Activated naive CD4-positive, alpha-beta T cell treated with anti-CD3 and anti-CD28 coated beads for 36 hours (primary cell): ENCODE measurements at regions of chr2 and their contacts with region 1.

Region 1: DNA sequence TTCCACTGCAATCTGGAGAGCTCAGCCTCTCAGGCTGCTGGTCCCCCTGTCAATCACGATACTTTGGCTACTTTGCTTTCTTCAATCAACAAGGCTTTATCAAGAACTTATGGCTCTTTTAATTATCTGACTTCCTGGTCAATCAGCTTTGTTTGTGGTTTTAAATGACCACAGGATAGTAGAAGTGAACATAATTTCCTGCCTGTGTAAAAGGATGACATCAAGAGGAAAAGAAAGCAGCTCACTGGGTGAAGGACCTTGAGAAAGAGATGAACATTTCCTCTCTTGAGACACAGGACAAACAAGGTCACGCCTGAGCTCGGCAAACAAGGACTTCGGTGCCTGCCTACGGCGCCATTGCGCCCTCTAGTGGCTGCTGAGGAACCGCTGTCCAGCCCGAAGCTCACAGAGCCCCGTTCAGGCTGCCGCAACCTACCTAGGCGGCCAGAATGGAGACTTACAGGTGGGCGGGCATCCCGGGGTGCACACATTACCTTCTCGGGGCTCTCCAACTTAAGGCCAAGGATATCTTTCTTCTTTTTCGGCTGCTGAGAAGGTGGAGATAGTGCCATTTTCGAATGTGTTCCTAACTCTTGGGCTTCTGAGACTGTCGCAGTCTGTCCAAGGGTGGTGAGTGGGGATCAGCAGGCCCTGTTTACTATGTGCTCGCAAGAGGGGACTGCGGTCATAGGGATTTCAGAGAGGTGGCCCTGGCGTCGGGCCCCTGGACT is 54.0 kb downstream of the IL1RL2 start:
- DNase-seq: peak; percentile 92
- H3K4me3 Mint-ChIP-seq: no peak overlapping the region
- H3K27ac Mint-ChIP-seq: peak overlapping the region; percentile 7
- H3K4me1 Mint-ChIP-seq: peaks cover 31% of the 10 kb centered on the region
- H3K27me3 Mint-ChIP-seq: no peaks in the 10 kb centered on the region

Region 2: GRCh38 chr2:101900375-101900774 is 340.4 kb before region 1 on chr2:
- CTCF ChIA-PET with region 1: interaction called, 3 read pairs
- intact Hi-C with region 1: loop called (anchors 5 kb)
- DNase-seq: peak; percentile 87
- H3K4me3 Mint-ChIP-seq: no peak overlapping the region
- H3K27ac Mint-ChIP-seq: peak overlapping the region; percentile 87
- H3K4me1 Mint-ChIP-seq: peaks cover 33% of the 10 kb centered on the region
- H3K27me3 Mint-ChIP-seq: peaks cover 2% of the 10 kb centered on the region

Region 3: DNA sequence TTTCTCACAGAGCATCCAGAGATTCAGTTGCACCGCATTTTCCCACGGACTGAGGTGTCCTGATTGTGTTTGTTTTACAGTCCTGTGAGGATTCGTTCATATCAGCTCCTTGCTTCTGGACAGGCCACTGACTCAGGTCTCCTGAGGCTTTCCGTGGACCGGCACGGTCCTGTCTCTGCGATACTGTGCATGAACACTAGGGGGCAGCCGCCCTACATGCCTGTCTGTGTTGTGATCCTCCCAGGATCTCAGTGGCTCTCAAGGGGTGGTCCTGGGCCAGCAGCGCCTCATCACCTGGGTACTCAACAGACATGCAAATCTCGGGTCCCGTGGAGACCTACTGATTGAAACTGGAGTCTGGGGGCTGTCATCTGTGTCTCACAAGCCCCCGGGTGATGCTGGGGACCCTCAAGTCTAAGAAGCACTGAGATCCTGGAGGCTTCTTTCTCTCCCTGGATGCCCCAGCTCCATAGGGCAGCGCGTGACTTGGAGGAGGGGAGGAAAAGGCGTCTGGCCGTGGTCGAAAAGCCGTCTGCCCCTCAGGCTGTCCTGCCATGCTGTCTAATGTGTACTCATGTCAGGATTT is 220.1 kb before region 1 on chr2:
- CTCF ChIA-PET with region 1: interaction called, 96 read pairs
- intact Hi-C with region 1: loop called (anchors 1 kb)
- DNase-seq: peak; percentile 93
- H3K4me3 Mint-ChIP-seq: no peak overlapping the region
- H3K27ac Mint-ChIP-seq: no peak overlapping the region
- H3K4me1 Mint-ChIP-seq: peaks cover 25% of the 10 kb centered on the region
- H3K27me3 Mint-ChIP-seq: no peaks in the 10 kb centered on the region

Region 4: GRCh38 chr2:102197389-102198137 is 43.2 kb before region 1 on chr2:
- CTCF ChIA-PET with region 1: interaction called, 12 read pairs
- intact Hi-C with region 1: no loop called
- DNase-seq: no peak
- H3K4me3 Mint-ChIP-seq: no peak overlapping the region
- H3K27ac Mint-ChIP-seq: no peak overlapping the region
- H3K4me1 Mint-ChIP-seq: no peaks in the 10 kb centered on the region
- H3K27me3 Mint-ChIP-seq: peaks cover 20% of the 10 kb centered on the region

Region 5: GRCh38 chr2:102442967-102443828 is 202.4 kb after region 1 on chr2:
- CTCF ChIA-PET with region 1: interaction called, 49 read pairs
- intact Hi-C with region 1: no loop called
- DNase-seq: peak; percentile 74
- H3K4me3 Mint-ChIP-seq: no peak overlapping the region
- H3K27ac Mint-ChIP-seq: peak overlapping the region; percentile 34
- H3K4me1 Mint-ChIP-seq: peaks cover 10% of the 10 kb centered on the region
- H3K27me3 Mint-ChIP-seq: no peaks in the 10 kb centered on the region